ENCODE measurements at regions of chr17 and their contacts with region 1.

Region 1: DNA sequence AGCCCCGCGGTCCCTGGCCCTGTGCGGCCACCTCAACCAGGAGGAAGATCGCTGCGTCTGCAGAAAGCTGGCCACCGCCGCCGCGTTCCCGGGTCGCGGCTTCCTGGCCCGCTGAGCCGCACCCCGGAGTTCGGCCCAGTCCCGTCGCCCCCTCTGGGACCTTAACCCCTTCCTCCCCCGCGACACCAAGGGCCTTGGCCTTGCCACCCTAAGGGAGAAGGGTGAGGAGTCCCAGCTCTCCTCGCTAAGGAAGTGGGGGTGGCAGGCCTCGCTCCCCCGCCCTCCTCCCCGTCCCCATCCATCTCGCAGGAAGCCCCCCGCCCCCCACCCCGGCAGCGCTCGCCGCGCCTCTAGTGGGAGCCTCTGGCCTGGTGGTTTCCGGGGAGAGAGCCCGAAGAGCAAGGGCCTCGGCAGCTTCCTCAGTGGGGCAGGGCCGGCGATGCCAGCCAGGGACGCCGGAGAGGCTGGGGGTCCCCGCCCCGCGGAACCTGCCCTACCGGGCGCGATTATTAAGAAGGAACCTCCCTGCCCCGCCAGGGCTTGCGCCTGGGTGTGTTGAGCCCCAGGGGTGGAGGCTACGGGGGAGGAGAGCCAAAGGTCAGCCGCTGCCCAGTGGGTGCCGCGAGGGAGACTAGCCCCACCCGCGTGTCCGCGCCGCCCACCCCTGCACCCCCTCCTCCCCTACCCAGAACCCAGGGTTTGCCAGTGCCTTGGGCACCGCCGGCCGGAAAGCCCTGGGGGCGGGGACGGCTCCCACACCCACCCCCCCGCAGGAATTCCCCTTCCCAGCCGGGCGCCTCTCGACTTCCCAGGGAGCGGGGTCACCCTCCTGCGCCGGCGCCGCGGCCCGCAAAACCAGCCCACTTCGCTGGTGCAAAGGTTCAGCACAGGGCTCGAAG is 6.8 kb downstream of the CBX4 start:
- DNase-seq: no peak
- ATAC-seq: peak; percentile 7
- H3K4me3 ChIP-seq: peak overlapping the region; percentile 44; the same call in 1 of the 2 replicates
- H3K27ac ChIP-seq: no peak overlapping the region
- H3K4me1 ChIP-seq: peaks cover 27% of the 10 kb centered on the region
- H3K27me3 ChIP-seq: no peaks in the 10 kb centered on the region
- CTCF ChIP-seq: no peak

Region 2: DNA sequence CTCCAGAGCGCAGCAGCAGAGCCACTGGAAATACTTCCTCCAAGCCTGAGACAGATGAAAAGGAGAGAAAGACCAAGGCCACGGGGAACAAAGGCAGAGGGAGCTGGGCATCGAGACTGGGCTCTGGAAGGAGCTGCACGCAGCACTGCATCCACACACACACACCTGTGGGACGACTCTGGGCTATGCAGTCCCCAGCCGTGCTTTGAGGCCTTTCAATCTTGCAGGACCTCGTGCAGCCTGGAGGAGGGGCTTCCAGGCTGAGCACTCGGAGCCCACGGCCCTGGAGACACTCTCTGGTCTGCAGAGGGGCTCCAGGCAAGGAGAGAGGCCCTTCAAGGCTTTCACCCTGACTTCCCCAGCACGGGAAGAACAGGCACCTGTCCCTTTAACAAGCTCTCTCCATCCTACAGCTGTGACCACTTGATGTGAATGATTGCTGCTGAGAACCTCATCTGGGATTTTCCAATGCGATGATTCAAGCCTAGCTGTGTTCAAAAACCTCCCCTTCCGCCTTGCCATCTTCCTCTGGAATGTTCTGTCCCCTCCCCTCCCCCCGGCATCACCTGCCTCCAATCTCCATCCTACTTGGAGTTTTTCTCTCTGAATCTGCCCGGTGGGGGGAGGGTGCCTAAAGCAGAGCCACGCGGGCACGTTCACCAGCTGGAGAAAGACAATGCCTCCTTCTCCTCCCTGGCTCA is 259.1 kb before region 1 on chr17:
- CTCF ChIA-PET with region 1: no interaction called
- POLR2A ChIA-PET with region 1: no interaction called
- intact Hi-C with region 1: no loop called
- DNase-seq: peak; percentile 16
- ATAC-seq: no peak
- H3K4me3 ChIP-seq: no peak overlapping the region
- H3K27ac ChIP-seq: no peak overlapping the region
- H3K4me1 ChIP-seq: 0 out of 2 replicates have a peak, but pooled peaks cover 4% of the 10 kb centered on the region
- H3K27me3 ChIP-seq: peaks cover 59% of the 10 kb centered on the region
- CTCF ChIP-seq: no peak

Region 3: DNA sequence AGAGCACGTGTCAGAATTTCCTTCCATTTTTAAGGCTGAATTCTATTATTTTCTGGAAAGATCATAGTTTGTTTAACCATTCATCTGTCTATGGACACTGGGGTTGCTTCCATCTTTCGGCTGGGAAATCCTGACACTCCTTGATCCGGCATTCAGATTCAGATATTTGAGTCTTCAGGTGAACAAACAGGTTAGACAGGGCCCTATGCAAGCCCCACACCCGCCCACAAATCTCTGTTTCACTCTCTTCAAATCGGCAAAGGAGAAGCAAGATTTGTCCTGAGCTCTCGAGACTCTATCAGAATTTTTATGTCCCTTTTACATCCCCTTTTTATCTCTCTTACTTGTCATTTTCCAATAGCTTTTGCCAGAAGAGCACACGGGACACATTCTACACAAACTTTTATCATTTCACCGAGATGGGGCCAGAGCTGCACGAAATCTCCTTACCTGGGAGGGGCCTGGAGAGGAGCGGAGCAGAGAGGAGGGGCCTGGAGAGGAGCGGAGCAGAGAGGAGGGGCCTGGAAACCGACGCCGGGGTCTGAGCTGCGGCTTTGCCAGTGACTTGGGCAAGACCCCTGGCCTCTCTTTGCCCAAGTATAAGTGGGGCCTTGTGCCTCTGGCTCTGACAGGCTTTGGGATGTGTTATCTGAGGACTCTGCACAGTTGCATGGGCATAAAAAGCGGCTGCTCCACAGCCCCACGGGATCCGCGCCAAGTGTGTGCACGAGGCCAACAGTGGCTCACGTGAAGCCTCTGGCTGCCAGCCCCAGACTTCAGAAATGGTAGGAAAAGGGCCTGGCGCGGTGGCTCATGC is 167.3 kb before region 1 on chr17:
- CTCF ChIA-PET with region 1: no interaction called
- POLR2A ChIA-PET with region 1: no interaction called
- intact Hi-C with region 1: no loop called
- DNase-seq: peak; percentile 83
- ATAC-seq: peak; percentile 90
- H3K4me3 ChIP-seq: peak overlapping the region; percentile 71
- H3K27ac ChIP-seq: peak overlapping the region; percentile 45
- H3K4me1 ChIP-seq: peaks cover 17% of the 10 kb centered on the region
- H3K27me3 ChIP-seq: peaks cover 30% of the 10 kb centered on the region
- CTCF ChIP-seq: no peak

Region 4: GRCh38 chr17:79769596-79770520 is 62.6 kb before region 1 on chr17:
- CTCF ChIA-PET with region 1: no interaction called
- POLR2A ChIA-PET with region 1: no interaction called
- intact Hi-C with region 1: no loop called
- DNase-seq: peak; percentile 80
- ATAC-seq: peak; percentile 85
- H3K4me3 ChIP-seq: no peak overlapping the region
- H3K27ac ChIP-seq: peak overlapping the region; percentile 44
- H3K4me1 ChIP-seq: peaks cover 16% of the 10 kb centered on the region
- H3K27me3 ChIP-seq: no peaks in the 10 kb centered on the region
- CTCF ChIP-seq: no peak

Region 5: DNA sequence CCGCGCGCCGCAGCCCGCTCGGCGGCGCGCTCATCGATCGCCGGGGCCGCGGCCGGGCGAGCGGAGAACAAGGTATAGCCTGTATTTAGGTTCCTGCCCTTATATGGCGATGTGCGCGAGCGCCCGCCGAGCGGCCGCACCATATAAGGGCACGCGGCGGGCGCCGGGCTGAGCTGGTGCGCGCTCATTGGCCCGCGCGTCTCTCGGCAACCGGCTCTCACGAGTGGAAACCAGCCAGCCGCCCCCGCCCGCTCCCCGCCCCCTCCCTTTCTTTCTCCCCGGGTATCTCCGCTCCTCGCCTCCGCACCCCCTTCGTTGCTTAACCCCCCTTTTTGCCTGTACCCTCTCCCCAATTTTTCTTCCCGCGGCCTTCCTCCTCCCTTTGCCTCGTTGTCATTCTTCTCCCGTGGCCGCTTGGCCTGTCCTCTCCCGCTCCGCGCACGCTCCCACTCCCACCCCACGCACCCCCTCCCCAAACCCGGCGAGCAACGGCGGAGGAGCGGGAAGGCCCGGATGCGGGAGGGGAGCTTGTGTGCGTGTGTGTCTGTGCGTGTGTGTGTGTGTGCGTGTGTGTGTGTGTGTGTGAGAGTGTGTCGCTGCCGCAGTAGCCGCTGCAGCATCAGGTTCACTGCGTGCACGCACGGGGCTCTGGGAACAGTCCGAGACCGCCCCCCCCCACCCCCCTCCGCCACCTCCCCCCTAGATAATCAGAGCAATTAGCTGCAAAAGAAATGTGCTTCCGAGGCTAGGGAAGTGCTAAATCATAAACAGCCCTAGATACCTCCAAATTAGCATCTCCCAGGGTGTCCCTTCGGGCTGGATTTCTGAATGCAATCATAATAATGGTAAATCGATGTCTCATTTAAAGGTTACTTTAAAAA is 22.1 kb before region 1 on chr17:
- CTCF ChIA-PET with region 1: interaction called, 12 read pairs
- POLR2A ChIA-PET with region 1: interaction called, 13 read pairs
- intact Hi-C with region 1: no loop called
- DNase-seq: peak; percentile 93
- ATAC-seq: peak; percentile 81
- H3K4me3 ChIP-seq: peak overlapping the region; percentile 59
- H3K27ac ChIP-seq: no peak overlapping the region
- H3K4me1 ChIP-seq: peaks cover 29% of the 10 kb centered on the region
- H3K27me3 ChIP-seq: peaks cover 62% of the 10 kb centered on the region
- CTCF ChIP-seq: no peak

Region 6: GRCh38 chr17:80647746-80648145 is 815.3 kb after region 1 on chr17:
- CTCF ChIA-PET with region 1: no interaction called
- POLR2A ChIA-PET with region 1: no interaction called
- intact Hi-C with region 1: no loop called
- DNase-seq: peak; percentile 79
- ATAC-seq: peak; percentile 69
- H3K4me3 ChIP-seq: no peak overlapping the region
- H3K27ac ChIP-seq: peak overlapping the region; percentile 45
- H3K4me1 ChIP-seq: peaks cover 29% of the 10 kb centered on the region
- H3K27me3 ChIP-seq: no peaks in the 10 kb centered on the region
- CTCF ChIP-seq: no peak